Ascending aorta (tissue), 2 donors: ENCODE measurements at regions of chr1 and their contacts with region 1.

Region 1: GRCh38 chr1:17587989-17588685 is 48.6 kb downstream of the ARHGEF10L start:
- DNase-seq: peak; percentile 50 to 81
- H3K4me3 ChIP-seq: peak overlapping the region in 1 of 2 donors; percentile 29
- H3K27ac ChIP-seq: peak overlapping the region; percentile 85 to 90
- H3K4me1 ChIP-seq: peaks cover 30 to 73% of the 10 kb centered on the region in 2 donors
- H3K27me3 ChIP-seq: no peaks in the 10 kb centered on the region
- CTCF ChIP-seq: no peak

Region 2: GRCh38 chr1:17540255-17541001 is 47.7 kb before region 1 on chr1:
- intact Hi-C with region 1: loop called (anchors 5 kb)
- DNase-seq: peak in 1 of 2 donors; percentile 86
- H3K4me3 ChIP-seq: peak overlapping the region; percentile 69 to 97
- H3K27ac ChIP-seq: peak overlapping the region; percentile 98 to 100
- H3K4me1 ChIP-seq: peaks cover 12 to 49% of the 10 kb centered on the region in 2 donors
- H3K27me3 ChIP-seq: no peaks in the 10 kb centered on the region
- CTCF ChIP-seq: peak in 1 of 3 experiments; percentile 4

Region 3: GRCh38 chr1:17569200-17570161 is 18.7 kb before region 1 on chr1:
- intact Hi-C with region 1: loop called (anchors 1 kb)
- DNase-seq: peak; percentile 86 to 97
- H3K4me3 ChIP-seq: peak overlapping the region in 1 of 2 donors; percentile 22
- H3K27ac ChIP-seq: peak overlapping the region; percentile 95 to 98
- H3K4me1 ChIP-seq: peaks cover 46 to 83% of the 10 kb centered on the region in 2 donors
- H3K27me3 ChIP-seq: no peaks in the 10 kb centered on the region
- CTCF ChIP-seq: no peak

Region 4: GRCh38 chr1:17617787-17618557 is 29.8 kb after region 1 on chr1:
- intact Hi-C with region 1: loop called (anchors 2 kb)
- DNase-seq: peak; percentile 71 to 94
- H3K4me3 ChIP-seq: peak overlapping the region; percentile 50 to 68
- H3K27ac ChIP-seq: peak overlapping the region; percentile 91 to 97
- H3K4me1 ChIP-seq: peaks cover 35 to 62% of the 10 kb centered on the region in 2 donors
- H3K27me3 ChIP-seq: no peaks in the 10 kb centered on the region
- CTCF ChIP-seq: peak in 1 of 3 experiments; percentile 27